ENCODE measurements at regions of chr19 and their contacts with region 1.

Region 1: GRCh38 chr19:53195265-53195903 is 2.2 kb upstream of the ZNF665 start:
- DNase-seq: peak; percentile 83
- ATAC-seq: peak; percentile 50
- H3K4me3 Mint-ChIP-seq: peak overlapping the region; percentile 22
- H3K27ac Mint-ChIP-seq: peak overlapping the region; percentile 8
- H3K4me1 Mint-ChIP-seq: peaks cover 33% of the 10 kb centered on the region
- H3K27me3 Mint-ChIP-seq: no peaks in the 10 kb centered on the region

Region 2: DNA sequence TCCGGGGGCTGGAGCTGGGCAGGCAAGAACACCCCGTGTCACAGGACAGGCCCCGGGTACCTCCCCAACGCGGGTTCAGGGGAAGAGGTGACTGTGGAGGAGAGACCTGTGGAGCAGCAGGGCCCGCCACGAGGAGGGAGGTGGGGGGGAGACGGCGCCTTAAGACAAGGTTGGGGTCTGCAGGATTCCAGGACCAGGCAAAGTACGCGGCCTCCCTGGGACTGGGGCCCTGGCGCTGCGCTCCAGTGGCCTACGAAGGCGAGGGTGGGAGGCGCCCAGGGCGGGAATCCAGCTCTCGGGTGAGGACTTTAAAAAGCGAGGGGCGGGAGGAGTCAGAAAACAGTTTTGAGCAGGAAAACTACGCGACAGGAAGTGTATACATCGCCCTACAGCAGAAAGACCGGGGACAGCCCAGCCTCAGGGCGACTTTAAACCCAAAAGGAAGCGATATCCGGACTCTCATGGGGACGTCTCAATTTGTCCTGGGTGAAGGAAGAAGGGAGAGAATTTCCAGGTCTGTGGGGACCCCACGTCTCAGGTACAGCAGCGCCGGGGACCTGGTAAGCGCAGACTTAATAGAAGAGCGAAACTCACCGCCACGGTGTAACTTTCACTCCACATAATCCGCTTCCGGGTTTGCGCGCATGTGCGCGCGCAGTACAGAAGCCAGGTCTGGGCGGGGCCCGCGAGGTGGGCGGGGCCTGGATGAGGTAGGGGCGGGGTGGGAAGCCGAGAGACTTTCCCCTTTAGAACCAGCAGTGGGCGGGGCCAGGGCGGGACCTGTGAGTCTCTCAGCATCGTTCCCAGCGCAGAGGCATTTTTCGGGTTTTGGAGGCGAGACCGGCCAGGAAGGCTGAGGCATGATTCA is 557.4 kb before region 1 on chr19 and contains the start of gene ZNF83:
- CTCF ChIA-PET with region 1: no interaction called
- POLR2A ChIA-PET with region 1: no interaction called
- intact Hi-C with region 1: loop called in 1 of 2 experiments (anchors 1 kb)
- DNase-seq: peak; percentile 99
- ATAC-seq: peak; percentile 97
- H3K4me3 Mint-ChIP-seq: peak within 1 kb of the TSS; percentile 92
- H3K27ac Mint-ChIP-seq: peak within 1 kb of the TSS; percentile 96
- H3K4me1 Mint-ChIP-seq: peaks cover 13% of the 10 kb centered on the region
- H3K27me3 Mint-ChIP-seq: no peaks in the 10 kb centered on the region
- total RNA-seq, gene ZNF83: 23.8 to 27.5 TPM

Region 3: GRCh38 chr19:52993323-52994178 is 201.8 kb before region 1 on chr19:
- CTCF ChIA-PET with region 1: no interaction called
- POLR2A ChIA-PET with region 1: no interaction called
- intact Hi-C with region 1: loop called in 1 of 2 experiments (anchors 5 kb)
- DNase-seq: peak; percentile 88
- ATAC-seq: peak; percentile 88
- H3K4me3 Mint-ChIP-seq: peak overlapping the region; percentile 72
- H3K27ac Mint-ChIP-seq: no peak overlapping the region
- H3K4me1 Mint-ChIP-seq: peaks cover 15% of the 10 kb centered on the region
- H3K27me3 Mint-ChIP-seq: peaks cover 9% of the 10 kb centered on the region

Region 4: GRCh38 chr19:53333463-53334449 is 138.4 kb after region 1 on chr19 and contains the start of gene ZNF845:
- CTCF ChIA-PET with region 1: interaction called, 3 read pairs
- POLR2A ChIA-PET with region 1: no interaction called
- intact Hi-C with region 1: loop called (anchors 1 kb)
- DNase-seq: peak; percentile 97
- ATAC-seq: peak; percentile 99
- H3K4me3 Mint-ChIP-seq: peak within 1 kb of the TSS; percentile 88
- H3K27ac Mint-ChIP-seq: peak within 1 kb of the TSS; percentile 92
- H3K4me1 Mint-ChIP-seq: peaks cover 10% of the 10 kb centered on the region
- H3K27me3 Mint-ChIP-seq: peaks cover 5% of the 10 kb centered on the region
- total RNA-seq, gene ZNF845: 5.9 to 6.3 TPM

Region 5: GRCh38 chr19:53394974-53395839 is 199.8 kb after region 1 on chr19 and contains the start of gene ZNF765:
- CTCF ChIA-PET with region 1: no interaction called
- POLR2A ChIA-PET with region 1: no interaction called
- intact Hi-C with region 1: loop called in 1 of 2 experiments (anchors 1 kb)
- DNase-seq: peak; percentile 98
- ATAC-seq: peak; percentile 99
- H3K4me3 Mint-ChIP-seq: peak within 1 kb of the TSS; percentile 84
- H3K27ac Mint-ChIP-seq: peak within 1 kb of the TSS; percentile 89
- H3K4me1 Mint-ChIP-seq: peaks cover 25% of the 10 kb centered on the region
- H3K27me3 Mint-ChIP-seq: no peaks in the 10 kb centered on the region
- total RNA-seq, gene ZNF765: 10.7 to 10.9 TPM

Region 6: DNA sequence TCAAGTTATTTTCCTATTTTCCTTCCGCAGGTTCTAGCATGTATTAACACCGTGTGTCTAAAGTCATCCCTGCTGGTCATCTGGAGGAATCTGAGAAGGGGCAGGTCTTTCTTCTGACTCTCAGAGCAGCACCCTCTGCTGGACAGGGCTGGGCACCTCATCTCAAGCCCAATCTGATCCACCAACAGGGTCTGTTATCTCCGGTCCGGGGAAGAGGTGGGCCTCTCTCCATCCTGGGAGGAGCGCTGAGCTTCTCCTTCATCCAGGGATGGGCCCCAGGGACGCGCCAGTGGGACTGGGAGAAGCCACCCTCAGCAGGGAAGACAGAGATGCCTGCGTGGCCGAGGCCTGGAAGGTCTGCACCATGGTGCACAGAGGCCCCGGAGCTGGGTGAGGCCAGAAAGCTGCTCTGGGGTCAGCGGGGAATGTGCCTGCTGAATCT is 316.6 kb after region 1 on chr19:
- CTCF ChIA-PET with region 1: no interaction called
- POLR2A ChIA-PET with region 1: no interaction called
- intact Hi-C with region 1: loop called (anchors 1 kb)
- DNase-seq: peak; percentile 71
- ATAC-seq: peak; percentile 84
- H3K4me3 Mint-ChIP-seq: no peak overlapping the region
- H3K27ac Mint-ChIP-seq: no peak overlapping the region
- H3K4me1 Mint-ChIP-seq: no peaks in the 10 kb centered on the region
- H3K27me3 Mint-ChIP-seq: peaks cover 5% of the 10 kb centered on the region